Left cardiac atrium (tissue), 4 donors: ENCODE measurements at regions of chr17 and their contacts with region 1.

Region 1: GRCh38 chr17:10115071-10115539 is 83.3 kb downstream of the GAS7 start:
- DNase-seq: peak; percentile 94
- ATAC-seq: peak; percentile 92 to 93

Region 2: GRCh38 chr17:10041916-10042588 is 73.1 kb before region 1 on chr17:
- intact Hi-C with region 1: loop called in 1 of 2 experiments (anchors 5 kb)
- DNase-seq: no peak
- ATAC-seq: peak; percentile 27 to 79

Region 3: DNA sequence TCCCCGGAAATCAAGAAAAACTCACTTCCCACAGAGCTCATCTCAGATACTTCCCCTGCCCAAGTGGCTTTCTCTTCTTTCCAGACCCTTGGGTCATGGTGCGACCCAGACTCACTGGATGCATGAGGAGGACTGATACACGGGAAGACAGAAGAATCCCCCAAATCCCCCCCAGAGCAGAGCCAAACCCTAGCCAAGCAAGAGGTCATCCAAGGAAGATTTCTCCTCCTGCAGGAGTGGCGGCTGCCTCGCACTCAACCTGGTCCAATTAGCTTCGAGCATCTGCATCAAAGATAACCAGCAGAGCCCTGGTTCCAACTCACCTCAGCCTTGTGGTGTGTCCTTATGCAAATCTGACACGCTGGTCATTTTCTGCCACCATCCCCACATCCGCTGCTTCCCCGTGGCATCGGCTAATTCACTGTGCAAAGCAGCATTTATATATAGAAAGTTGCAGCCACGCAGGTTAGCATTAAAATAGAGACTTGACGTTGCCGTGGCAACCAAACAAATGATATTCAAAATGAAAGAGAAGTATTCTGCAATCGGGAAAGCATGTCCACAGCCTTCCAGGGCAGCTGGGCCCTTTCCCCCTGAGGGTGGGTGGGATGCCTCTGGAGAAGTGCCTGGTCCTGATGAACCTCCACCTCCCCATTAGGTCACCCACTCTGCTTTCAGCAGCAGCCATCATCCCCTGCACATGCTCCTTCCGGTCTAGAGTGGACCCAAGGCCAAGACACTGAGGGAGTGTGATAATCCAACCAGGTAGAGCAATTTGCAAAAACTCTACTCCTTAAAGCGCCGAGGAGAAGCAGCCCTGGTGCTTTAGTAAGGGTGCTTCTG is 55.5 kb before region 1 on chr17:
- intact Hi-C with region 1: loop called in 1 of 2 experiments (anchors 10 kb)
- DNase-seq: peak; percentile 59
- ATAC-seq: peak; percentile 32 to 58

Region 4: GRCh38 chr17:10172241-10172741 is 57.2 kb after region 1 on chr17:
- intact Hi-C with region 1: no loop called
- DNase-seq: no peak
- ATAC-seq: peak; percentile 51 to 61

Region 5: GRCh38 chr17:10357768-10358167 is 242.7 kb after region 1 on chr17:
- intact Hi-C with region 1: no loop called
- DNase-seq: no peak
- ATAC-seq: no peak